Heart right ventricle (tissue), 16 donors: ENCODE measurements at regions of chr19 and their contacts with region 1.

Region 1: GRCh38 chr19:13093407-13094105 is 9.1 kb downstream of the LYL1 start:
- DNase-seq: peak; percentile 83
- ATAC-seq: peak; percentile 57 to 80 (median 67)
- H3K4me3 ChIP-seq: no peak overlapping the region
- H3K27ac ChIP-seq: peak overlapping the region; percentile 43 to 96 (median 90)
- H3K4me1 ChIP-seq: peaks cover 43 to 96% (median 83%) of the 10 kb centered on the region in 9 donors
- H3K27me3 ChIP-seq: no peaks in the 10 kb centered on the region
- CTCF ChIP-seq: peak; percentile 94 to 98 (median 96)

Region 2: GRCh38 chr19:12913011-12913561 is 180.5 kb before region 1 on chr19:
- intact Hi-C with region 1: no loop called
- DNase-seq: peak; percentile 71 to 75
- ATAC-seq: peak; percentile 77 to 92 (median 86)
- H3K4me3 ChIP-seq: peak overlapping the region in 8 of 10 donors; percentile 2 to 40 (median 26)
- H3K27ac ChIP-seq: peak overlapping the region in 9 of 10 donors; percentile 41 to 80 (median 67)
- H3K4me1 ChIP-seq: peaks cover 4 to 26% (median 20%) of the 10 kb centered on the region in 9 donors
- H3K27me3 ChIP-seq: no peaks in the 10 kb centered on the region
- CTCF ChIP-seq: no peak

Region 3: GRCh38 chr19:13069415-13070359 is 23.9 kb before region 1 on chr19:
- intact Hi-C with region 1: loop called in 1 of 10 experiments (anchors 2 kb)
- DNase-seq: no peak
- ATAC-seq: peak in 1 of 8 donors; percentile 8
- H3K4me3 ChIP-seq: peak overlapping the region in 3 of 10 donors; percentile 16 to 31 (median 20)
- H3K27ac ChIP-seq: peak overlapping the region; percentile 66 to 99 (median 81)
- H3K4me1 ChIP-seq: peaks cover 54 to 94% (median 74%) of the 10 kb centered on the region in 9 donors
- H3K27me3 ChIP-seq: no peaks in the 10 kb centered on the region
- CTCF ChIP-seq: no peak

Region 4: GRCh38 chr19:13262450-13262849 is 168.9 kb after region 1 on chr19:
- intact Hi-C with region 1: no loop called
- DNase-seq: no peak
- ATAC-seq: peak; percentile 33 to 75 (median 58)
- H3K4me3 ChIP-seq: no peak overlapping the region
- H3K27ac ChIP-seq: no peak overlapping the region
- H3K4me1 ChIP-seq: peaks cover 0 to 18% (median 0%) of the 10 kb centered on the region in 9 donors
- H3K27me3 ChIP-seq: peaks cover 0 to 5% (median 0%) of the 10 kb centered on the region in 7 donors
- CTCF ChIP-seq: peak in 8 of 9 donors; percentile 39 to 76 (median 66)

Region 5: DNA sequence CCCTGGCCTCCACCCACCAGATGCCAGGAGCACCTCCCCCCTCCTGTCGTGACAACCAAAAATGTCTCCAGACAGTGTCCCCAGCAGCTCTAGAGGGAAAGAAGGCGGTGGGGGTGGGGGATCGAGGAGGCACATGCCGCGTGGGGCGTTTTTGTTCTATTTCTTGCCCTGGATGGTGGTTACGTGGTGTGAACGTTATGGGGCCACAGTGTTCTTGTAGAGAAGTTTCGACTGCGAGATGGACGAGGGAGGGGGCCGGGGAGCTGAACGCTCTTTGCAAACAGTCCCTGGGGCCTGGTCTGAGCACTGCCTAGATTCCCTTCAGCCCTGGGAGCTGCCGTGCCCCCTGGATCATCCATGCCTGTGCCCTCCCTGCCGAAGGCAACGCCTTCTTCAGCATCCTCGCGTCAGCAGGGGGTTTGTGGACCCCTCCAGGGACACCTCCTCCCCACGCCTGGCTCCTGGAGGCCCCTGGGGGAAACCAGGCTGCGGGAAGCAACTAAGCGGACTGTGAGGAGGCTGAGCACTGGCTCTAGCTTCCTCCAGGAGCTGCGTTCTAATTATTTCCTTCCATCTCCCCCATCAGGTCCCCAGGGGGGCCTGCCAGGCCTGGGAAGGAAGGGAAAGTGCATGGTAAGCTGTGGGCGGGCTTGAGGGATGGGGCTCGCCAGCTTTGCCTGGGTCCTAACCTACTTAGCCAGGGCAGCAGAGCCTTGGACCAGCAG is 188.2 kb after region 1 on chr19:
- intact Hi-C with region 1: no loop called
- DNase-seq: no peak
- ATAC-seq: peak in 7 of 8 donors; percentile 9 to 60 (median 25)
- H3K4me3 ChIP-seq: no peak overlapping the region
- H3K27ac ChIP-seq: no peak overlapping the region
- H3K4me1 ChIP-seq: peaks cover 0 to 9% (median 0%) of the 10 kb centered on the region in 9 donors
- H3K27me3 ChIP-seq: peaks cover 0 to 35% (median 19%) of the 10 kb centered on the region in 7 donors
- CTCF ChIP-seq: no peak